GM12878 (cell line): ENCODE measurements at regions of chr1 and their contacts with region 1.

Region 1: DNA sequence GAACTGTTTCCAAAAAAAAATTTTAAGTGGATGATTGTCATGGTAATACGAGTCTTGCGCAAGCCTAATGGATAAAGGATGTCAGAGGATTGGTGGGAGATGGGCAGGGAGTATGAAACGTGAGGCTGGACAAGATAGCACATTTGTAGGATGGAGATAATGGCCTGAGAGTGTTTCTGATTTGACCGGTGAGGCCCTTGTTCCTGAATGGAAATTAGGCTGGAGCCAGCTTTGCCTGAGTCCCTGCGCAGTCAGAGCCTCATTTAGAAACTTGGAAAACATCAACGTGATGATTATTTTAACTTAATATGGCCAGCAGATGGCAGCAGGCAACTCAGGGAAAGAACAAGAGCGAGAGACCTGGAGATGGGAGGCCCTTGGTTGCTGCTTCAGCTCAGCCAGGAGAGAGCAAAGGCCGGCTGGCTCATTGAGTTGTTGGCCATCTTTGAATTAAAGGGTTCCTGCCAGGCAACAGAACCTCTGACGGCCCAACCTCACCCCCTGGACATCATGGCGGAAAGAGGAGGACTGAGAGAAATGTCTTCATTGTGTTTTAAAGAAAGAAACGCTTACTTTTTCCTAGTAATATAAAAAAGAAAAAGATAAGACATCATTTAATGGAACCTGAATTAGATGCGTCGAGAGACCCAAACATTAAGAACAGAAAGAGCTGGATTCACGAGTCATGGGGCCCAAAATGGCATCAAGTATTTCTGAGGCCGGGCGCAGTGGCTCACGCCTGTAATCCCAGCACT is 80.3 kb downstream of the SELENOF start:
- DNase-seq: peak; percentile 41
- ATAC-seq: peak; percentile 96
- H3K4me3 ChIP-seq: no peak overlapping the region
- H3K27ac ChIP-seq: no peak overlapping the region
- H3K4me1 ChIP-seq: no peaks in the 10 kb centered on the region
- H3K27me3 ChIP-seq: no peaks in the 10 kb centered on the region
- CTCF ChIP-seq: peak; percentile 40 to 79 (median 49); a peak in 5 of 6 replicates
- EP300 ChIP-seq: no peak
- POLR2A ChIP-seq: no peak
- RAD21 ChIP-seq: peak; percentile 93

Region 2: DNA sequence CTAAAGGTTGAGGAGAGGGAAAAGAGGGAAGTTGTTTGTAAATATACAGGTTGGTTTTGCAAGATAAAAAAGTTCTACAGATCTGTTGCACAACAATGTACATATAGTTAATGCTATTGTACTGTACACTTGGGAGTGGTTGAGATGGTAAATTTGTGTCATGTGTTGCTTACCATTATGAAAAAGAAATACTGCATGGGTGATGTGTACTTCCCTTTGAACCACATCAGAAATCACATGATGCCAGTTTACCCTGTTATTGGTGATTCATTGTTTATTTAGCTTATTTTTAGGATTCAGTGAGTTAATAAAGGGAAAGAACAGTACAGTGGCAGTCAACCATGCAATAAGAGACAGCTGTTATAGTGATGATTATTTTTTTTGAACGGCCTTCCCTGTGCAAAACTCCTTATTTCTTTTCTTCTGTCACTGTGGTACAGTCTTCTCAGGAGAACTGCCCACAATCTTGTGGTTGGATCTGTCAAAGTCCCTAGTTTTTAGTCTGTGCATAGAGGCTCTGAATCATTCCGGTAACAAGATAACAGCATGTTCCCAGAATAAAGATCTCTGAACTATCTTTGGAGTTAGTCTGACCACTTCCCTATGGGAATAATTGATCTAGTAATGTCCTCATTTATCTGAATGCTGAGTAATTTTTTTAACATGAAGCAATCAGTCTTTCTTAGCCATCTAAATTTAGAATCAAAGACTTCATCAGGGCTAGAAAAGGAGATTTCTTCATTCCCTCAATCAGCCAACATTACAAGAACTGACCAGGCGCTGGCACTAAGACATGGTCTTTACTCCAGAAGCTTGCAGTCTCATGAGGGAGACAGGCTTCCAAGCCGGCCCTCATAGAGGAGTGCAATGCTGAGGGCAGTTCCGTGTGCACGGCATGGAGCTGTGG is 45.1 kb before region 1 on chr1:
- CTCF ChIA-PET with region 1: no interaction called
- POLR2A ChIA-PET with region 1: no interaction called
- RAD21 ChIA-PET with region 1: no interaction called
- SMC1A ChIA-PET with region 1: no interaction called
- in situ Hi-C with region 1: no loop called
- intact Hi-C with region 1: no loop called
- DNase-seq: no peak
- ATAC-seq: no peak; the same call in 2 of the 3 replicates
- H3K4me3 ChIP-seq: no peak overlapping the region
- H3K27ac ChIP-seq: no peak overlapping the region
- H3K4me1 ChIP-seq: no peaks in the 10 kb centered on the region
- H3K27me3 ChIP-seq: no peaks in the 10 kb centered on the region
- CTCF ChIP-seq: no peak
- EP300 ChIP-seq: no peak
- POLR2A ChIP-seq: no peak
- RAD21 ChIP-seq: no peak

Region 3: DNA sequence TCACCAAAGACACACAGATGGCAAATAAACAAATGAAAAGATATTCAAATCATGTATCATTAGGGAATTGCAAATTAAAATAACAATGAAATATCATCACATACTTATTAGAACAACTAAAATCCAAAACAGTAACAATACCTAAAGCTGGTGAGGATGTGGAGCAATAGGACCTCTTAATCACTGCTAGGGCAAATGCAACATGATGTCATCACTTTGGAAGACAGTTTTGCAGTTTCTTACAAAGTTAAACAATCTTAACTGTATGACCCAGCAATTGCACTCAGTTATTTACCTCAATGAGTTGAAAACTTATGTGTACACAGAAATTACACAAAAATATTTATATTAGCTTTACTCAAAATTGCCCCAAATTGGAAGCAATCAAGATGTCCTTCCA is 33.0 kb after region 1 on chr1:
- CTCF ChIA-PET with region 1: no interaction called
- POLR2A ChIA-PET with region 1: no interaction called
- RAD21 ChIA-PET with region 1: no interaction called
- SMC1A ChIA-PET with region 1: no interaction called
- in situ Hi-C with region 1: no loop called
- intact Hi-C with region 1: no loop called
- DNase-seq: no peak
- ATAC-seq: peak; percentile 57
- H3K4me3 ChIP-seq: no peak overlapping the region
- H3K27ac ChIP-seq: no peak overlapping the region
- H3K4me1 ChIP-seq: no peaks in the 10 kb centered on the region
- H3K27me3 ChIP-seq: no peaks in the 10 kb centered on the region
- CTCF ChIP-seq: no peak
- EP300 ChIP-seq: no peak
- POLR2A ChIP-seq: no peak
- RAD21 ChIP-seq: no peak

Region 4: GRCh38 chr1:86965012-86965826 is 131.6 kb after region 1 on chr1:
- CTCF ChIA-PET with region 1: interaction called, 46 read pairs
- POLR2A ChIA-PET with region 1: no interaction called
- RAD21 ChIA-PET with region 1: interaction called, 8 read pairs
- SMC1A ChIA-PET with region 1: interaction called, 31 read pairs
- in situ Hi-C with region 1: no loop called
- intact Hi-C with region 1: loop called (anchors 1 kb)
- DNase-seq: no peak
- ATAC-seq: peak; percentile 81
- H3K4me3 ChIP-seq: no peak overlapping the region
- H3K27ac ChIP-seq: peak overlapping the region; percentile 8; the same call in 1 of the 2 replicates
- H3K4me1 ChIP-seq: peaks cover 4% of the 10 kb centered on the region; the same call in 1 of the 2 replicates
- H3K27me3 ChIP-seq: no peaks in the 10 kb centered on the region
- CTCF ChIP-seq: peak; percentile 26 to 51 (median 47); a peak in 4 of 6 replicates
- EP300 ChIP-seq: no peak
- POLR2A ChIP-seq: no peak
- RAD21 ChIP-seq: peak; percentile 59; the same call in 1 of the 2 replicates

Region 5: GRCh38 chr1:87024936-87025540 is 191.4 kb after region 1 on chr1:
- CTCF ChIA-PET with region 1: interaction called, 7 read pairs
- POLR2A ChIA-PET with region 1: no interaction called
- RAD21 ChIA-PET with region 1: no interaction called
- SMC1A ChIA-PET with region 1: no interaction called
- in situ Hi-C with region 1: no loop called
- intact Hi-C with region 1: loop called (anchors 5 kb)
- DNase-seq: no peak
- ATAC-seq: peak; percentile 92
- H3K4me3 ChIP-seq: no peak overlapping the region
- H3K27ac ChIP-seq: no peak overlapping the region
- H3K4me1 ChIP-seq: peaks cover 5% of the 10 kb centered on the region; the same call in 1 of the 2 replicates
- H3K27me3 ChIP-seq: no peaks in the 10 kb centered on the region
- CTCF ChIP-seq: peak; percentile 35 to 53 (median 51); a peak in 4 of 6 replicates
- EP300 ChIP-seq: no peak
- POLR2A ChIP-seq: no peak
- RAD21 ChIP-seq: peak; percentile 53

Region 6: GRCh38 chr1:87077959-87078639 is 244.5 kb after region 1 on chr1:
- CTCF ChIA-PET with region 1: interaction called, 198 read pairs
- POLR2A ChIA-PET with region 1: interaction called, 5 read pairs
- RAD21 ChIA-PET with region 1: interaction called, 76 read pairs
- SMC1A ChIA-PET with region 1: interaction called, 101 read pairs
- in situ Hi-C with region 1: loop called (anchors 5 kb)
- intact Hi-C with region 1: no loop called
- DNase-seq: no peak
- ATAC-seq: peak; percentile 47
- H3K4me3 ChIP-seq: no peak overlapping the region
- H3K27ac ChIP-seq: peak overlapping the region; percentile 46; the same call in 1 of the 2 replicates
- H3K4me1 ChIP-seq: peaks cover 13% of the 10 kb centered on the region
- H3K27me3 ChIP-seq: no peaks in the 10 kb centered on the region
- CTCF ChIP-seq: no peak
- EP300 ChIP-seq: no peak
- POLR2A ChIP-seq: no peak
- RAD21 ChIP-seq: no peak